Right cardiac atrium (tissue), 5 donors: ENCODE measurements at regions of chr22 and their contacts with region 1.

Region 1: GRCh38 chr22:24156913-24157821 is 24.1 kb upstream of the SUSD2 start:
- DNase-seq: peak; percentile 80 to 94 (median 93)
- ATAC-seq: peak; percentile 80 to 83
- H3K4me3 ChIP-seq: peak overlapping the region; percentile 91
- H3K27ac ChIP-seq: peak overlapping the region; percentile 74
- H3K4me1 ChIP-seq: peaks cover 28% of the 10 kb centered on the region
- H3K27me3 ChIP-seq: no peaks in the 10 kb centered on the region

Region 2: DNA sequence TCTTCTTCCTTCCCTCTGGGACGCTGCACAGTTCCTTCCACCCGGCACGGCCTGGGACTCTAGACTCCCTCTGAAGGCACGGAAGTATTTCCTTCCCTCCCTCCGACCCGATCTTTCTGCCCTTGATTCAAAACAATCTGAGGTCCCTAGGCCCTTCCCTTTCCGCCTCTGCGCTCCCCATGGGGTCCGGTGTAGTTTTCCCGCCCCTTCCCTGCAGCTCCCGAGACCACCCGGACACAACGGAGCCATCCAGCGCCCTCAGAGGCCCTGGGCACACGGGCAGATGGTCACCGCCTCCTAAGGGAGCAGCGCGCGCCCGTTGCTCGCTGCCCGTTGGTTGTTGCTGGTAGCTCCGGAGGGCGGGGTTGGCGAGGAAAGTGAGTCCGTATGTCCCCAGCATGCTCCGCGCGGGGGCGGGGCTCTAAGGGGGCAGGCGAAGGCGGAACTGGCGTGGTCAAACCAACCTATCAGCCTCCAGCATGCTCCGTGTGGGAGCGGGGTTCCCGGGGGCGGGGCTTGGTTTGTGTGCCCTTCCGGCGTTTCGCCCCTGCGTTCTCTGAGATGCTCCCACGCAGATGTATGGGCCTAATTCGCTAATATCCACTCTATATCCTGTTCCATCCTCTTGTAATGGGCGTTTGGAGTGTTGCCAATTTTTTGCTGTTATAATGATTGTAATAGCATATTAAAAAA is 243.4 kb before region 1 on chr22:
- intact Hi-C with region 1: loop called in 1 of 4 experiments (anchors 5 kb)
- DNase-seq: peak; percentile 100
- ATAC-seq: peak; percentile 99
- H3K4me3 ChIP-seq: peak overlapping the region; percentile 50
- H3K27ac ChIP-seq: peak overlapping the region; percentile 79
- H3K4me1 ChIP-seq: peaks cover 2% of the 10 kb centered on the region
- H3K27me3 ChIP-seq: no peaks in the 10 kb centered on the region

Region 3: GRCh38 chr22:24005201-24005600 is 152.0 kb before region 1 on chr22 and contains the start of gene GSTT4:
- intact Hi-C with region 1: loop called in 1 of 4 experiments (anchors 10 kb)
- DNase-seq: peak; percentile 68 to 87 (median 86)
- ATAC-seq: peak; percentile 67 to 85
- H3K4me3 ChIP-seq: no peak within 1 kb of the TSS
- H3K27ac ChIP-seq: no peak within 1 kb of the TSS
- H3K4me1 ChIP-seq: no peaks in the 10 kb centered on the region
- H3K27me3 ChIP-seq: no peaks in the 10 kb centered on the region
- total RNA-seq, gene GSTT4: not detected

Region 4: GRCh38 chr22:24106385-24107381 is 50.5 kb before region 1 on chr22:
- intact Hi-C with region 1: loop called in 3 of 4 experiments (anchors 5 to 10 kb)
- DNase-seq: no peak
- ATAC-seq: peak in 1 of 2 donors; percentile 30
- H3K4me3 ChIP-seq: no peak overlapping the region
- H3K27ac ChIP-seq: peak overlapping the region; percentile 59
- H3K4me1 ChIP-seq: peaks cover 25% of the 10 kb centered on the region
- H3K27me3 ChIP-seq: no peaks in the 10 kb centered on the region